GM10248 (cell line): ENCODE measurements at regions of chr3 and their contacts with region 1.

Region 1: DNA sequence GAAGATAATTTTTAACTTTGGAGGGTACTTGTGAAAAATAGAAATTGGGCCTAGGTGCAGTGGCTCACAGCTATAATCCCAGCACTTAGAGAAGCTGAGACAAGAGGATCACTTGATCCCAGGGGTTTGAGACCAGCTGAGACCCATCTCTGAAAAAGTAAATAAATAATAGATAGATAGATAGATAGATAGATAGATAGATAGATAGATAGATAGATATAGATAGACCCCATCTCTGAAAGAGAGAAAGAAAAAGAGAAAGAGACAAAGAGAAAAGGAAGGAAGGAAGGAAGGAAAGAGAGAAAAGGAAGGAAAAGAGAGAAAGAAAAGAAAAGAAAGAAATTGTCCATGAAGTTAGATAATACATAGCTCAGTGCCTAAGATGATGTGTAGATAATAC is 35.5 kb downstream of the MRPS25 start:
- DNase-seq: no peak
- CTCF ChIP-seq: no peak

Region 2: DNA sequence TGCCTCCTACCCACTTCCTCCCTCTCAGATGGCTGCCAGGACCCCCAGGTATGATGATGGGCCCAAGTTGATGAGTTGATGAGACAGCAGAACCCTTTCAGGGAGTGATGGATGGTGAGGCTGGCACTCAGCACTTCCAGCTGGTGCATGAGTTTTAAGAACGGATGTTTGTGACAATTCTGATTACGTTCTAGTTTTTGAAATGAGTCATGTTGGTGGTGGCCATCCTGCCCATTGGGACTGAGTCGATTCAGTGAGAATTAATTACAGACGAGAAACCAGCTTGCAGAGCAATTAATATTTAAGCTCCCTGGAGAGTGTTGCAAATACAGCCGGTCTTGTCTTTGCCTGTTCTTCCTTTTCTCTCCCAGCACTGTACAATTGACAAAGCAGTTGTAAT is 139.1 kb before region 1 on chr3:
- CTCF ChIA-PET with region 1: no interaction called
- POLR2A ChIA-PET with region 1: no interaction called
- DNase-seq: no peak
- CTCF ChIP-seq: no peak

Region 3: DNA sequence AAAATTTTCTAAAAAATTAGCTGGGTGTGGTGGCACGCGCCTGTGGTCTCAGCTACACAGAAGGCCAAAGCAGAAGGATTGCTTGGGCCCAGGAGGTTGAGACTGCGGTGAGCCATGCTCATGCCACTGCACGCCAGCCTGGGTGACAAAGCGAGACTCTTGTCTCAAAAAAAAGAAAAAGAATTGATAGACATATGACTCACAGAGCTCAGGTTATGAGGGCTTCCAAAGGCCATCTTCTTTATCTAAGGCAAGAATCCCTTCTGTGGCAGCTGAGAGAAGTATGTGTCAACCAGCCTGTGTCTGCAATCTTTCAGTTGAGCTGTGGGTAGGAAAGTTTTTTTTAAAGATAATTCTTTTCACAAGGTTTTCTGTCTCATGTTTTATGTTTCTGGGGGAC is 18.5 kb before region 1 on chr3:
- CTCF ChIA-PET with region 1: interaction called, 10 read pairs
- POLR2A ChIA-PET with region 1: no interaction called
- DNase-seq: no peak
- CTCF ChIP-seq: no peak